Right cardiac atrium (tissue), 5 donors: ENCODE measurements at regions of chr15 and their contacts with region 1.

Region 1: GRCh38 chr15:57861036-57861638 is 154.6 kb downstream of the POLR2M start:
- DNase-seq: no peak
- ATAC-seq: peak in 1 of 2 donors; percentile 45
- H3K4me3 ChIP-seq: no peak overlapping the region
- H3K27ac ChIP-seq: no peak overlapping the region
- H3K4me1 ChIP-seq: no peaks in the 10 kb centered on the region
- H3K27me3 ChIP-seq: no peaks in the 10 kb centered on the region

Region 2: GRCh38 chr15:57751177-57751800 is 109.8 kb before region 1 on chr15:
- intact Hi-C with region 1: loop called in 3 of 4 experiments (anchors 2 to 5 kb)
- DNase-seq: no peak
- ATAC-seq: peak; percentile 49 to 63
- H3K4me3 ChIP-seq: no peak overlapping the region
- H3K27ac ChIP-seq: no peak overlapping the region
- H3K4me1 ChIP-seq: peaks cover 2% of the 10 kb centered on the region
- H3K27me3 ChIP-seq: no peaks in the 10 kb centered on the region

Region 3: DNA sequence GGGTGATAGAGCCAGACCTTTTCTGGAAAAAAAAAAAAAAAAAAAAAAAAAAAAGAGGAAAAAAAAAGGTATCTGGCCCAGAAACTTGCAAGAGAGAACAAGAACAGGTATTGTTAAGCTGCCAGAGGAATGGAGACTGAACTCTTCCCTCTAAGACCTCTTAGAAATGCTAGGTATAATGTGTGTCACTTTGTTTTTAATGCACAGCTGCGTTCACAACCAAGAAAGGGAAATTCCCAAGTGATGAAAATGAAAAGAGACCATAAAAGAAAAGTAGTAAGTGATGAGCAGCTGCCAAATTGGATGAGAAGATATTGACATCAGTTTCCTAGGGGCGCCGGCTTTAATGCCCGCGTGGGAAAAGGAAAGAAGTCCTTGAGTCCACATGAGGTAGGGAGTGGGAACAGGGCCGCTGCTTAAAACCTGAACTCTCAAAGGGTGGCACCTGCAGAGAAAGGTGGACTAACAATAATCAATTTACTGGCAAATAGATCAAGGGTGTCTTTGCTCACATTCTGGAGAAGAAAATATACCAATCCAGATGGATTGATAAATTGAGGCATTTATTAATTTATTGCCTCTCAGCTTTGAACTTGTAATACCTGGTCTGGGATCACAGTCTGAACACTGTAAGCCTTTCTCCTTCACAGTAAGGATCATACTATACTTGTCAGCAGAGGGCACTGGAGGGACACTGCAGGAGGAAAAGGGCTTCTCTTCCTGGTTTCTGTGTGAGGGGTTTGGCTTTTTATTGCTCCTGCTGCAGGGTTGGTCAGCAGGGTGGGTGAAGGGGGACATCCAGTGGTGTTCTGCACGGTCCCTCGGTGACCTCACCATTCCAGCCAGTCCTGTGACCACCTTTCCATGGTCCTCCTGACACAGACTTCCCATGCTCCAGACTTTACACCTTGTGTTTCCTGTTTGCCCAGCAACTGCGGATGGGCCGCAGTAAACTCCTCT is 408.6 kb after region 1 on chr15:
- intact Hi-C with region 1: no loop called
- DNase-seq: no peak
- ATAC-seq: peak; percentile 85 to 91
- H3K4me3 ChIP-seq: no peak overlapping the region
- H3K27ac ChIP-seq: peak overlapping the region; percentile 75
- H3K4me1 ChIP-seq: peaks cover 3% of the 10 kb centered on the region
- H3K27me3 ChIP-seq: no peaks in the 10 kb centered on the region